ENCODE measurements at regions of chr22 and their contacts with region 1.

Region 1: GRCh38 chr22:39946503-39947219 is 13.5 kb upstream of the TMA7B start:
- DNase-seq: no peak
- ATAC-seq: no peak
- H3K4me3 ChIP-seq: no peak overlapping the region
- H3K4me3 Mint-ChIP-seq: peak overlapping the region; percentile 69
- H3K27ac ChIP-seq: peak overlapping the region; percentile 26 to 37
- H3K27ac Mint-ChIP-seq: no peak overlapping the region
- H3K4me1 ChIP-seq: peaks cover 94% of the 10 kb centered on the region
- H3K4me1 Mint-ChIP-seq: peaks cover 99% of the 10 kb centered on the region
- H3K27me3 ChIP-seq: no peaks in the 10 kb centered on the region
- H3K27me3 Mint-ChIP-seq: no peaks in the 10 kb centered on the region
- CTCF ChIP-seq: no peak

Region 2: DNA sequence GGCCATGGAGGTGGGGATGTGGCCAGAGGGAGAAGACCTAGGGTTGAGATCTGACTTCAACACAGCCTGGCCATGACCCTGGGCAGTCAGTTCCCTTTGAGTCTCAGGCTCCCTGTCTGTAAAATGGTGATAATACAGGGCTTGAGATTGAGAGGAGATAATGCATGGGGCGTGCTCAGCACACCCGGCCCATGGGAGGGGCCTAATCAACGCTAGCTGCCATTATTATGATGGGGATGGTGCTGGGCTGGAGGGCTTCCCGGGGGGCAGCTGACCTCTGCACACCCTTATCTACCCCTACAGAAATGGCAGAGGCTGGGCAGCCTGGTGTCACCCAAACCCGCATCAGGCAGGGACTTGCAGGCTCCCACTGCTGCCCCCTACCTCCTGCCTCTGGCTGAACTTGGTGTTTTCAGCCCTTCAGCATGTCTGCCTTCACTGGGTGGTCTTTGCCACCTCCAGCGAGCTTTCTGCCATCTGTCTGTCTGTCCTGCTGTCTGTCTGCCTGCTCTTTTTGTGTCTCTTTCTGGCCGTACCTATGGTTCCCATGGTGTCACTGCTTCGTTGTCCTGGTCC is 291.6 kb before region 1 on chr22:
- CTCF ChIA-PET with region 1: no interaction called
- POLR2A ChIA-PET with region 1: interaction called, 3 read pairs
- intact Hi-C with region 1: loop called in 1 of 2 experiments (anchors 5 kb)
- DNase-seq: no peak
- ATAC-seq: no peak
- H3K4me3 ChIP-seq: no peak overlapping the region
- H3K4me3 Mint-ChIP-seq: no peak overlapping the region
- H3K27ac ChIP-seq: no peak overlapping the region
- H3K27ac Mint-ChIP-seq: peak overlapping the region; percentile 67
- H3K4me1 ChIP-seq: peaks cover 47% of the 10 kb centered on the region
- H3K4me1 Mint-ChIP-seq: peaks cover 47% of the 10 kb centered on the region
- H3K27me3 ChIP-seq: no peaks in the 10 kb centered on the region
- H3K27me3 Mint-ChIP-seq: no peaks in the 10 kb centered on the region
- CTCF ChIP-seq: no peak

Region 3: GRCh38 chr22:39927544-39927943 is 19.1 kb before region 1 on chr22:
- CTCF ChIA-PET with region 1: interaction called, 12 read pairs
- POLR2A ChIA-PET with region 1: interaction called, 13 read pairs
- intact Hi-C with region 1: loop called in 1 of 2 experiments (anchors 2 kb)
- DNase-seq: no peak
- ATAC-seq: no peak
- H3K4me3 ChIP-seq: peak overlapping the region; percentile 51
- H3K4me3 Mint-ChIP-seq: no peak overlapping the region
- H3K27ac ChIP-seq: peak overlapping the region; percentile 38 to 58
- H3K27ac Mint-ChIP-seq: no peak overlapping the region
- H3K4me1 ChIP-seq: peaks cover 89% of the 10 kb centered on the region
- H3K4me1 Mint-ChIP-seq: peaks cover 39% of the 10 kb centered on the region
- H3K27me3 ChIP-seq: no peaks in the 10 kb centered on the region
- H3K27me3 Mint-ChIP-seq: no peaks in the 10 kb centered on the region
- CTCF ChIP-seq: no peak

Region 4: DNA sequence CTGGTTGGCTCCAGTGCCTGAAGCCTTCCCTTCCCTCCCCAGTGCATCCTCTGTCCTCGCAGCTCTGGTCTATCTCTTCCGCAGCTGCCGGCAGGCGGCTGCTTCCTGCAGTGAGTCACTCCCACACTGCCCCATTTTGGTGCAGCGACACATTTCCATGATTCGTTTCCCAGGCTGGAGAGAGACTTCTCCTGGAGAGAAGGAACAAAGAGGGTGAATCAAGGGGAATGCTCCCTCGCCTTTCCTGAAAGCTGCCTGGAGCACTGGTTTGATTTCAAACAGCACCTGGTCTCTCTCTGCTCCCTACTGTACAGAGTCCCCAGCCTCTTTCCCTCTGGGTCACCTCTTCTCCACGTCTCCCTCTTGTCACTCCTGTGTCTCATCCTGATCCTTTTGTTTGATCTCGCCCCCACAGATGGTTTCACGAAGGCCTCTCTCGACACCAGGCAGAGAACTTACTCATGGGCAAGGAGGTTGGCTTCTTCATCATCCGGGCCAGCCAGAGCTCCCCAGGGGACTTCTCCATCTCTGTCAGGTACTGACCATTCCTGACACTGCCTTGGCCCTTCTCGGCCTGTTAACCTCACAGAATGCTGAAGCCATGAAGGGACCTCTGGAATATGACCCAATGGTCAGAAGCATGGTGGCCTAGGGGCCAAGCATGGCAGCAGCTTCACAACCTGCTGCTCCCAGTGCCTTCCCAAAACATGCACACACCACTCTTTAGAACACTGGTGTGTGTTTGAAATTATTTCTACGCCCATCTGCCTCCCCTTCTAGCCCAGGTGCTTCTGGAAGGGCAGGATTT is 13.2 kb after region 1 on chr22 and contains the start of gene TMA7B:
- CTCF ChIA-PET with region 1: interaction called, 4 read pairs
- POLR2A ChIA-PET with region 1: interaction called, 6 read pairs
- intact Hi-C with region 1: loop called in 1 of 2 experiments (anchors 1 kb)
- DNase-seq: peak in 13 of 14 experiments; percentile 25 to 70 (median 43)
- ATAC-seq: peak; percentile 76
- H3K4me3 ChIP-seq: no peak within 1 kb of the TSS
- H3K4me3 Mint-ChIP-seq: peak within 1 kb of the TSS; percentile 63
- H3K27ac ChIP-seq: peak within 1 kb of the TSS; percentile 49 to 57
- H3K27ac Mint-ChIP-seq: peak within 1 kb of the TSS; percentile 77
- H3K4me1 ChIP-seq: peaks cover 72% of the 10 kb centered on the region
- H3K4me1 Mint-ChIP-seq: peaks cover 68% of the 10 kb centered on the region
- H3K27me3 ChIP-seq: no peaks in the 10 kb centered on the region
- H3K27me3 Mint-ChIP-seq: no peaks in the 10 kb centered on the region
- CTCF ChIP-seq: peak; percentile 52
- total RNA-seq, gene TMA7B: 5.7 to 6.5 TPM

Region 5: GRCh38 chr22:40070701-40071100 is 124.0 kb after region 1 on chr22:
- CTCF ChIA-PET with region 1: no interaction called
- POLR2A ChIA-PET with region 1: no interaction called
- intact Hi-C with region 1: no loop called
- DNase-seq: no peak
- ATAC-seq: no peak
- H3K4me3 ChIP-seq: no peak overlapping the region
- H3K4me3 Mint-ChIP-seq: peak overlapping the region; percentile 0
- H3K27ac ChIP-seq: no peak overlapping the region
- H3K27ac Mint-ChIP-seq: no peak overlapping the region
- H3K4me1 ChIP-seq: peaks cover 36% of the 10 kb centered on the region
- H3K4me1 Mint-ChIP-seq: peaks cover 83% of the 10 kb centered on the region
- H3K27me3 ChIP-seq: no peaks in the 10 kb centered on the region
- H3K27me3 Mint-ChIP-seq: no peaks in the 10 kb centered on the region
- CTCF ChIP-seq: no peak

Region 6: GRCh38 chr22:41106122-41106968 is 1159.7 kb after region 1 on chr22:
- CTCF ChIA-PET with region 1: no interaction called
- POLR2A ChIA-PET with region 1: no interaction called
- intact Hi-C with region 1: no loop called
- DNase-seq: no peak
- ATAC-seq: peak; percentile 37
- H3K4me3 ChIP-seq: no peak overlapping the region
- H3K4me3 Mint-ChIP-seq: peak overlapping the region; percentile 31
- H3K27ac ChIP-seq: peak overlapping the region in 1 of 2 donors; percentile 54
- H3K27ac Mint-ChIP-seq: peak overlapping the region; percentile 20
- H3K4me1 ChIP-seq: peaks cover 45% of the 10 kb centered on the region
- H3K4me1 Mint-ChIP-seq: peaks cover 70% of the 10 kb centered on the region
- H3K27me3 ChIP-seq: no peaks in the 10 kb centered on the region
- H3K27me3 Mint-ChIP-seq: no peaks in the 10 kb centered on the region
- CTCF ChIP-seq: no peak

Measured in CD4-positive, alpha-beta T cell (primary cell).